Activated CD8-positive, alpha-beta memory T cell treated with anti-CD3 and anti-CD28 coated beads, Interleukin-2, amount 10 ng/mL, durations not matched to agents 7 days and 5 days (primary cell): ENCODE measurements at regions of chr6 and their contacts with region 1.

Region 1: GRCh38 chr6:111793711-111794111 is 79.5 kb downstream of the FYN start:
- DNase-seq: peak; percentile 90
- ATAC-seq: peak; percentile 65
- H3K4me3 Mint-ChIP-seq: peak overlapping the region; percentile 80
- H3K27ac Mint-ChIP-seq: peak overlapping the region; percentile 98
- H3K4me1 Mint-ChIP-seq: peaks cover 66% of the 10 kb centered on the region
- H3K27me3 Mint-ChIP-seq: no peaks in the 10 kb centered on the region

Region 2: GRCh38 chr6:111777357-111777756 is 16.4 kb before region 1 on chr6:
- CTCF ChIA-PET with region 1: interaction called, 16 read pairs
- DNase-seq: peak; percentile 70
- ATAC-seq: peak; percentile 46
- H3K4me3 Mint-ChIP-seq: peak overlapping the region; percentile 69
- H3K27ac Mint-ChIP-seq: peak overlapping the region; percentile 89
- H3K4me1 Mint-ChIP-seq: peaks cover 87% of the 10 kb centered on the region
- H3K27me3 Mint-ChIP-seq: no peaks in the 10 kb centered on the region